Head of caudate nucleus (tissue), 42 donors: ENCODE measurements at regions of chr1 and their contacts with region 1.

Region 1: DNA sequence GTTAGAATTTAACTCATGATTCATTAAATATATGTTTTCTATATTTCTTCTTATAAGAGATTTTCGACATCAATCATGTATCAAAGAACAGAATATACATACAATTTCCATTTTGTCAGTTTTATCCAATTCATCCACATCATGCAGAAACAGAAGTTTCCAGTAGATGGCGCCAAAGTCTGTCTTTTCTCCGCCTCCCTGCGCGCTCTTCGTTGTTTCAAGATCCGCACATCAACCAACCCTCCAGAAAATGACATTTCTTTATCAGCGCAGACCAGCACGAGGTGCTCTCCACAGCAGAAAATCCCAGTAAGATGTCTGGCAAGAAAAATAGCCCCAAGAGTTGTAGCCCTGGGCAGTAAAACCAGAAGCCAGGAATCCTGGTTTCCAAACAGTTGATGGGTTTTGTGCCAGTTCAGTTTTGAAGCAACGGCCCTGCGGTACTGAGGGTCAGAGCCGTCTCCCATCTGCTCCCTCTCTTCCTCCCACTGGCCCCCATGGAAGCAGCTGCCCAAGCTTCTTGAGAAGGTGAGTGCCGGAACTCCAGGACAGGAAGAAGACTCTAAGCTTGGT is 38.6 kb upstream of the GPR137B start:
- DNase-seq: peak in 40 of 42 donors; percentile 23 to 89 (median 66)

Region 2: GRCh38 chr1:236489710-236490377 is 386.1 kb after region 1 on chr1:
- intact Hi-C with region 1: loop called (anchors 5 kb)
- DNase-seq: peak in 4 of 42 donors; percentile 14 to 46 (median 26)